Natural killer cell (primary cell): ENCODE measurements at regions of chr19 and their contacts with region 1.

Region 1: GRCh38 chr19:39671738-39672363 is 16.1 kb downstream of the LGALS16 start:
- DNase-seq: peak in 1 of 2 donors; percentile 81
- ATAC-seq: peak in 1 of 3 donors; percentile 55
- H3K4me3 ChIP-seq: no peak overlapping the region
- H3K4me3 Mint-ChIP-seq: no peak overlapping the region
- H3K27ac ChIP-seq: no peak overlapping the region
- H3K27ac Mint-ChIP-seq: no peak overlapping the region
- H3K4me1 ChIP-seq: no peaks in the 10 kb centered on the region
- H3K4me1 Mint-ChIP-seq: peaks cover 0 to 5% of the 10 kb centered on the region in 2 donors
- H3K27me3 ChIP-seq: peaks cover 3% of the 10 kb centered on the region
- H3K27me3 Mint-ChIP-seq: peaks cover 15 to 46% of the 10 kb centered on the region in 2 donors
- CTCF ChIP-seq: no peak

Region 2: GRCh38 chr19:39546599-39546998 is 125.3 kb before region 1 on chr19:
- intact Hi-C with region 1: loop called (anchors 1 kb)
- DNase-seq: no peak
- ATAC-seq: no peak
- H3K4me3 ChIP-seq: no peak overlapping the region
- H3K4me3 Mint-ChIP-seq: no peak overlapping the region
- H3K27ac ChIP-seq: no peak overlapping the region
- H3K27ac Mint-ChIP-seq: no peak overlapping the region
- H3K4me1 ChIP-seq: peaks cover under 1% of the 10 kb centered on the region
- H3K4me1 Mint-ChIP-seq: peaks cover 5 to 6% of the 10 kb centered on the region in 2 donors
- H3K27me3 ChIP-seq: no peaks in the 10 kb centered on the region
- H3K27me3 Mint-ChIP-seq: peaks cover 12 to 16% of the 10 kb centered on the region in 2 donors
- CTCF ChIP-seq: no peak

Region 3: DNA sequence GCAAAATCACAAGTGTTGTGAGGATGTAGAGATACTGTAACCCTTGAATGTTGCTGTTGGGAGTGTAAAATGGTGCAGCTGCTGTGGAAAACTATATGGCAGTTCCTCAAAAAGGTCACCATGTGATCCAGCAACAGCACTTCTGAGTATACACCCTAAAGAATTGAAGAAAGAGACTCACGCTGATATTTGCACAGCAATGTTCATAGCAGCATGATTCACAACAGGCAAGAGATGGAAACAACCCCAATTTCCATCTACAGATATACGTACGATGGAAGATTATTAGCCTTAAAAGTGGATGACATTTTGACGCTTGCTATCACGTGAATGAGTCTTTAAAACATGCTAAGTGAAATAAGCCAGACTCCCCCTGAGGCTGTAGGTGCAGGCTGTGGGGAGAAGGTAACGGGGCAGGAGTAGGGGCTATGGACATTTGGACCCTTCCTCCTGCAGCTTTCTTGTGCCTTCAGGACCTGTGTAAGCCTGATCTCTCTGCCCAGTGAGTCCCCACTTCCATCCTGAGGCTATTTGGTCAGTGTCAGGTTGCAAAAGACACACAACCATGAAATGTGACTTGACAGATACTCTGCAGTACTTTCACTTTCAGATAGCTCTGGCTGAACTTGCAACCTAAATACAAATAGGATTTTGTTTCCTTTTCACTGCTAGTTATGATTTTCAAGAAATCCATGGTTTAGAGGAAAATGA is 114.3 kb before region 1 on chr19:
- intact Hi-C with region 1: no loop called
- DNase-seq: peak in 1 of 2 donors; percentile 27
- ATAC-seq: peak in 1 of 3 donors; percentile 32
- H3K4me3 ChIP-seq: no peak overlapping the region
- H3K4me3 Mint-ChIP-seq: peak overlapping the region; percentile 51
- H3K27ac ChIP-seq: no peak overlapping the region
- H3K27ac Mint-ChIP-seq: peak overlapping the region; percentile 36 to 83
- H3K4me1 ChIP-seq: peaks cover 13% of the 10 kb centered on the region
- H3K4me1 Mint-ChIP-seq: peaks cover 13 to 14% of the 10 kb centered on the region in 2 donors
- H3K27me3 ChIP-seq: no peaks in the 10 kb centered on the region
- H3K27me3 Mint-ChIP-seq: peaks cover 5 to 12% of the 10 kb centered on the region in 2 donors
- CTCF ChIP-seq: no peak

Region 4: GRCh38 chr19:39617745-39618144 is 54.1 kb before region 1 on chr19:
- intact Hi-C with region 1: no loop called
- DNase-seq: no peak
- ATAC-seq: no peak
- H3K4me3 ChIP-seq: no peak overlapping the region
- H3K4me3 Mint-ChIP-seq: no peak overlapping the region
- H3K27ac ChIP-seq: no peak overlapping the region
- H3K27ac Mint-ChIP-seq: no peak overlapping the region
- H3K4me1 ChIP-seq: no peaks in the 10 kb centered on the region
- H3K4me1 Mint-ChIP-seq: no peaks in the 10 kb centered on the region
- H3K27me3 ChIP-seq: no peaks in the 10 kb centered on the region
- H3K27me3 Mint-ChIP-seq: peaks cover 35 to 61% of the 10 kb centered on the region in 2 donors
- CTCF ChIP-seq: no peak

Region 5: GRCh38 chr19:39661565-39661964 is 10.3 kb before region 1 on chr19:
- intact Hi-C with region 1: no loop called
- DNase-seq: no peak
- ATAC-seq: no peak
- H3K4me3 ChIP-seq: no peak overlapping the region
- H3K4me3 Mint-ChIP-seq: no peak overlapping the region
- H3K27ac ChIP-seq: no peak overlapping the region
- H3K27ac Mint-ChIP-seq: no peak overlapping the region
- H3K4me1 ChIP-seq: no peaks in the 10 kb centered on the region
- H3K4me1 Mint-ChIP-seq: no peaks in the 10 kb centered on the region
- H3K27me3 ChIP-seq: peaks cover 6% of the 10 kb centered on the region
- H3K27me3 Mint-ChIP-seq: peaks cover 19 to 47% of the 10 kb centered on the region in 2 donors
- CTCF ChIP-seq: no peak